Colonic mucosa (tissue), 4 donors: ENCODE measurements at regions of chr3 and their contacts with region 1.

Region 1: GRCh38 chr3:56997675-56998074 is 62.8 kb upstream of the SPATA12 start:
- DNase-seq: no peak
- H3K4me3 ChIP-seq: no peak overlapping the region
- H3K27ac ChIP-seq: peak overlapping the region; percentile 20
- H3K4me1 ChIP-seq: no peaks in the 10 kb centered on the region
- H3K27me3 ChIP-seq: no peaks in the 10 kb centered on the region
- CTCF ChIP-seq: no peak

Region 2: GRCh38 chr3:57078344-57078634 is 80.6 kb after region 1 on chr3:
- intact Hi-C with region 1: loop called (anchors 5 kb)
- DNase-seq: peak; percentile 69
- H3K4me3 ChIP-seq: peak overlapping the region; percentile 55
- H3K27ac ChIP-seq: peak overlapping the region; percentile 45
- H3K4me1 ChIP-seq: no peaks in the 10 kb centered on the region
- H3K27me3 ChIP-seq: no peaks in the 10 kb centered on the region
- CTCF ChIP-seq: no peak

Region 3: DNA sequence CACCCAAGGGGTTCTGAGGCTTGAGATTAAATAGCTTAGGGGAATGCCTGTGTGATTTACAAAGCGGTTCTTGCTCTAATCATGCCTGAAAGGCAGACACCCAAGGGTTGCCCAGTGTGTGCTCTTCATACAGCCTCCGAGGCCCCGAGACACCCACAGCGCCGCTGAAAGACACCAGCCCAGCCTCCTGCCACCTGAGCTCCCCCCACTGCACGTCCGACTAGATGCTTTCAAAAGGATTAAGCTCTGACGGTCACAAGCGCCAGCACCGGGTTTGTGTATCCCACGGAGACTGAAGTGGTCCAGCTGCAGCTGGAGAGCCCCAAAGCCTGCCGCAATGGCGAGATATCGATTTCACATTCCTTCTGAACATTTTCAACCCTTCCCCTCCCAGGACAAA is 113.1 kb after region 1 on chr3:
- intact Hi-C with region 1: no loop called
- DNase-seq: no peak
- H3K4me3 ChIP-seq: no peak overlapping the region
- H3K27ac ChIP-seq: no peak overlapping the region
- H3K4me1 ChIP-seq: no peaks in the 10 kb centered on the region
- H3K27me3 ChIP-seq: no peaks in the 10 kb centered on the region
- CTCF ChIP-seq: no peak